ENCODE measurements at regions of chr12 and their contacts with region 1.

Region 1: GRCh38 chr12:9750276-9751203 is 10.2 kb downstream of the CD69 start:
- DNase-seq: peak; percentile 81
- H3K4me3 ChIP-seq: no peak overlapping the region
- H3K27ac ChIP-seq: no peak overlapping the region
- H3K4me1 ChIP-seq: peaks cover 3% of the 10 kb centered on the region
- H3K27me3 ChIP-seq: no peaks in the 10 kb centered on the region
- CTCF ChIP-seq: peak; percentile 79

Region 2: DNA sequence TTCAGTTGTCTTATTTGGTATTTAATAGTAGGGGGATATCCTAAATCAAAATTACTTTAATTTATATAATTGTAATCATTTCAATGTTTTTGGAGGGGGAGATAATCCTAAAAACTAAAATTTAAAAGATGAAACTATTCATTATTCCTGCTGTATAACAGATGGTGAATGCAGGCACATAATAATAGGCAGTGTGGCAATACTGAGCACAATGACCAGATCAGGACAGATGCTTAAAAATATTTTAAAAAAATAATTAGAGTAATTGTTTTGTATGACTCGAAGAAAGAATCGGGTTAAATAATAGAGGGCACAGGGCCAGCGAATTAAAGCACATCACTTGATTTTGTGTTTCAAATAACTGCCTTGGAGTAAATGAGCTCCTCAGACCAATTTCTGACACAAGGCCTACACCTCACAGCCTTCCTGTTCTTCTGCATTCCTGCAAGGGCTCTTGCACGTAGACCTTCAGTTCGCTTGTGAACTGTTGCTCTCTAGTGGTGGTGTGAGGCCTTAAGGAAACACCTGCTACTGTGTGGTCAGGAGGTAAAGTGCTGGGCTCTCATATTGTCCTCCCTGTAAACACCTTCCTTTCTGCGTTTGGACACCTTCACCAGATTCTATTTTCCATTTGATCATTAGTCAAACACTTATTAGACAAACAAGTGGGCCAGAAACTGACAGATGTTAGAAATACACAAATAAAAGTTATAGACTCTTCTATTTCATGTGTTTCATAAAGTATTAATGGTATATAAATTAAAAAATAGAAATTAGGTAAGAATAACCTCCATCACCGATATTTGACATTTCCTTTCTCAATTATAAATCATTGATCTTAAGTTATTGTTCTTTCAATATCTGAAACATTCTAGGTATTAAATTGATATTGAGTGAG is 47.4 kb after region 1 on chr12:
- CTCF ChIA-PET with region 1: interaction called, 3 read pairs
- POLR2A ChIA-PET with region 1: no interaction called
- intact Hi-C with region 1: loop called (anchors 2 kb)
- DNase-seq: peak; percentile 53
- H3K4me3 ChIP-seq: no peak overlapping the region
- H3K27ac ChIP-seq: no peak overlapping the region
- H3K4me1 ChIP-seq: peaks cover 12% of the 10 kb centered on the region
- H3K27me3 ChIP-seq: no peaks in the 10 kb centered on the region
- CTCF ChIP-seq: peak; percentile 50

Region 3: DNA sequence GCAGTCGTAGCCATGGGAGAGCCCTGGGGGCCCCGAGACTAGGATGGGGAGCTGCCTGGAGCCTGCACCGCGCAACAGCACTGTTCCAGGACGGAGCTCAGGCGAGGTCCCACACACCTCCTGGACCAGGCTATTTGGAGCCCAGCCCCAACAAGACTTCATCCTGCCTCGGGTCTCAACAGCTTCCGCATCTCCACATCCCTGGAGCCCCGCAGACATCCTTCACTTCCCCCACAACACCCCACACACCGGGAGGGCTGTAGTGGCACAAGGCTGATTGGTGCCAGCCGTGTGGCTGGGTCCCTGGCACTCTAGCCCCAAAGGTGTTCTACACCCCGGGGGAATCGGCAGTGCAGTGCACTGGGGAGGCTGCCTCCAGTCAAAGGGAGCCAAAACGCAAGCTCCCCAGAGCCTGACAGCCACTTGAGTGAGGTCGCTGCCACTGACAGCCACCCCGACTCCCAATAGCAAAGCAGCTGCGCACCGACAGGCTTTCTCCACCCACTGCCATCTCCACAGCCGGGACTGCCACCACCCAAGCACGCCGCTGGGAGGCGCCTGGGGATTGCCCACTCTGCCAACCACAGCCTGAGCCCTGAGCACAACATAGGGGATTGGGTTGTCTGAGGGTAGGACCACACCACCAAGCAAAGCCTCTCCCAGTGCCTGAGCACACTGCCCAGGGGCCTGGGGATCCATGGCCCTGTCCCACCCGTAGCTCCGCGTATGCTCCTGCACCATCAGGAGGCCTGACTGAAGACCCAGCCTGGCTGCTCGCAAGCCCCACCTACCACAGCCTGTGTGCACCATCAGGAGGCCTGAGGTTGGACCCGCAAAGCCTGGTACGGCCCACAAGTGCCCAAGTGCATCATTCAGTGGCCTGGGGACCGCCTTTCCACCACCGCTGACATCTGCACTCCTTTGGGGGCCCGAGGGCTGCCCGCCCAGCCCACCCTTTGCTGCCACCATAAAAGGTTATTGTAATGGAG is 63.6 kb after region 1 on chr12:
- CTCF ChIA-PET with region 1: interaction called, 4 read pairs
- POLR2A ChIA-PET with region 1: no interaction called
- intact Hi-C with region 1: loop called (anchors 5 kb)
- DNase-seq: peak; percentile 81
- H3K4me3 ChIP-seq: peak overlapping the region; percentile 27
- H3K27ac ChIP-seq: no peak overlapping the region
- H3K4me1 ChIP-seq: peaks cover 5% of the 10 kb centered on the region
- H3K27me3 ChIP-seq: no peaks in the 10 kb centered on the region
- CTCF ChIP-seq: peak; percentile 97

Region 4: DNA sequence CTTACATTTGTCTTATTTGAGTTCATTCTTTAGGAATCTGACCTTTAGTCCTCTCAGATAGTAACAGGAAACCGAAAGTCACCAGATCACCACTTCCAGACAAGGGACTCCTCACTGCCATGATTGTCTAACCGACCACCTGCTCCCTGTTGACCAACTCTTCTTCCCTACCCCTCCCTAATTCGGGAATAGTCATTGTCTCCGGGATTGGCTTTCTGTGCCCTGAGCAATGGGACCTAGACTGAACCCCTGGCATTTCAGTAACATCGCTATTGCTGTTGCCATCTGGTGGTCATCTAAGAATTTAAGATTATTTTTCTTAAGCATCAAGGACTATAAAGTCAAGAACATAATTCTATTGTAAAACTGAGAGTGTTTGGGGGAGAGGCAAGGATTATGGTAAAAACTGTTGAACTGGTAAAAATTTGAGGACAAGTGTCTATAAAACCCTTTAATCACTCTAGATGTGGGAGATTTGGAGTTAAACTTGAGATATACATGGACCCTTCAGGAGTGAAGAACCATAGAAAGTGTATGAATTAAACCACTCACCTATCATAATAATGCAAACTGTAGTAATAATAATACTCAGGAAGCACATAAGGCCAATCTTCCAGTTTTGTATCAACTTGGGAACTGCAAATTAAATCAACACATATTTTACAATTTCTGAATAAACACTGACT is 175.3 kb after region 1 on chr12:
- CTCF ChIA-PET with region 1: no interaction called
- POLR2A ChIA-PET with region 1: no interaction called
- intact Hi-C with region 1: loop called (anchors 1 kb)
- DNase-seq: peak; percentile 59
- H3K4me3 ChIP-seq: no peak overlapping the region
- H3K27ac ChIP-seq: no peak overlapping the region
- H3K4me1 ChIP-seq: no peaks in the 10 kb centered on the region
- H3K27me3 ChIP-seq: peaks cover 21% of the 10 kb centered on the region
- CTCF ChIP-seq: peak; percentile 63

Region 5: DNA sequence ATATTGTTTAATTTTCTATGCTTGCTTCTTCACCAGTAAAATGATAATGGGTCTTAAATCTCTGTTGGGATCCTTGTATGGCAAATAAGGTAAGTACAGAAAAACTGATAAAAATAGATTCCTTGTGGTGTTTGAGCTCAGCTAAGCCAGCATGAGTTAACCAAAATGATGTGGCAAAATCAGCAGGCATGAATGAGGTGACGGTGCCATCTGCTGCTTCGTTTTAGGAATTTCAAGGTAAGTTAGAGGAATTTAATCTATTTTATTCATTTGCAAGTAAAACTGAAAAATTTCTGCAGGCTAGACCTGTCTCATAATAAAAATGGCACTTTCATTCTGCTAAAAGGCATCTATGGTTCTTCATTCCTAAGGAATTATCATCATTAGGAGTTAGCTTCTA is 389.5 kb after region 1 on chr12:
- CTCF ChIA-PET with region 1: interaction called, 3 read pairs
- POLR2A ChIA-PET with region 1: no interaction called
- intact Hi-C with region 1: loop called (anchors 2 kb)
- DNase-seq: peak; percentile 64
- H3K4me3 ChIP-seq: no peak overlapping the region
- H3K27ac ChIP-seq: no peak overlapping the region
- H3K4me1 ChIP-seq: no peaks in the 10 kb centered on the region
- H3K27me3 ChIP-seq: no peaks in the 10 kb centered on the region
- CTCF ChIP-seq: peak; percentile 61

Measured in A673 (cell line).